ENCODE measurements at regions of chr19 and their contacts with region 1.

Region 1: DNA sequence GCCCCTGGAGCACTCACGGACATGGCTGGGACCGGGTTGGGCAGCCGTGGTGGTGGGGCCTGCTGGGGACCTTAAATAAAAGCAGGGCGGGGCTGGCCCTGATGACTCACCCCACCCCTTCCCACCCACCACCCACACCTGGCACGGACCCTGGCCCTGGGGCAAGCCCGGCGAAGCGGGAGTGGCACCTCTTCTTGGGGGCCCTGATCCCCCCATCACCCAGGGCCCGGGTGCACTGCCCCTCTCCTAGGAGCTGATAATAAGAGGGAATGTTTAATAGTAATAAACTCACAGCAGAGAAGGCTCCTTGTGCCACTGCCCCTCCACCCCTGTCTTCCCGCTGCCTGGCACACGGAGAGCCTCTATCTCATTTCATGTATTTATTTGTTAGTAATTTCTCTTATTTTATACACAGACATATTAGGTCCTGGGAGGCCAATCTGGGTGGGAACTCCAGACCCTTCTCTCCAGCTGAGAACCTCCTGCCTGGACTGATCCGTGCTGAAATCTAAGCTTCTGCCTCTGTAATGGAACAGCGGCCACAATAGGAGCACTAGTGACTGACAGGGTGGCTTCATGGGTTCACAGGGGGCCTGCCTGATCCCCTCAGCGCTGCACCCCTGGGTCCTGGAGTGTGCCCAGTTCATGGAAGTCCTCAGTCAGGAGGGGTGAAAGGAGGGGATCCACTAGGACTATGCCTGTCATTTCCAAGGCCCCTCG is at the start of gene LGALS7:
- DNase-seq: peak in 1 of 10 donors; percentile 15
- H3K4me3 ChIP-seq: no peak within 1 kb of the TSS
- H3K27ac ChIP-seq: no peak within 1 kb of the TSS
- H3K27me3 ChIP-seq: no peaks in the 10 kb centered on the region
- CTCF ChIP-seq: no peak
- total RNA-seq, gene LGALS7: 1.1 to 1.2 (median 1.2) TPM in 3 of 120 experiments, not detected in the others

Region 2: DNA sequence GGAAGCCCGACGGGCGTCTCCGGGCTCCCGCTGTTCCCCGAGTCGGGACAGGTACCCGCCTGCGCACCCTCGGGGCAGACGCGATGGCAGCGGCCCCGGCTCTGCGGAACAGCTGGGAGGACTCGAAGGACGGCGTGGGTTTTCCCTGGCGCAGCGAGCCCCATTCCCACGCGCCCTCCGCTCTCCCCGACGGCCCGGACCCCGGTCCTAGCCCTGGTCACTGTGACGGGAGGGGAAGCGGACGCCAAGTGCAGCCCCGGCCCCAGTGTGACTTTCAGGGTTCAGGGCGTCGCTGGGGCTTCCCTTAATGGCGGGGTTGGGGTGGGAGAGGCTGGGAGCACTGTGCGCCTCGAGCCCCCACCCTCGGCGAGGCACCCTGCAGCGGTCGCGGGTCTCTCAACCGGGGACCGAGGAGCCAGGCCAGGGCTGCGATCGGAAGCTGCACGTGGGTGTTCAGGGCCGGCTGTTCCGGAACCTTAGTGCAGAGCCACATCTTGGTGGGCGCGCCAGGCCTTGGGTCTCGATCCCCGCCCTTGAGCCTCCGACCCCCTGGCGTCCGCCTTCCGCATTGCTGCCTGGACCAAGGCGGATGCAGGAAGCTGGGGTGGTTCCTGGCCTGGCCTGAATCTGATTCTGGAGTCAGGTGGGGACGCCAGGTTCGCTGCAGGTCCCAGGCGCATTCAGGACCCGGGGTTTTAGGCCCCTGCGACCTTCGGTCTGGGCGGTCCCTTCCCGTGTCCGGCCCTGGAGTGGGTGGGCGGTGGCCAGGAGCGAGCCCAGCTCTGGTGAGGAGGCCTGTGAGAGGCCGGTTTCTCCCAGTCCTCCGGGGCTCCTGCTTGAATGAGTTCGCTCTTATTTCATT is 18.9 kb after region 1 on chr19:
- intact Hi-C with region 1: loop called in 1 of 2 experiments (anchors 2 kb)
- DNase-seq: peak in 1 of 10 donors; percentile 47
- H3K4me3 ChIP-seq: peak overlapping the region in 34 of 59 donors; percentile 2 to 50 (median 33)
- H3K27ac ChIP-seq: peak overlapping the region in 35 of 59 donors; percentile 10 to 79 (median 51)
- H3K27me3 ChIP-seq: no peaks in the 10 kb centered on the region
- CTCF ChIP-seq: peak in 9 of 56 donors; percentile 3 to 33 (median 18)

Measured in dorsolateral prefrontal cortex (tissue), 120 donors.